BJ (cell line): ENCODE measurements at regions of chr1 and their contacts with region 1.

Region 1: GRCh38 chr1:236759252-236759859 is 35.7 kb upstream of the MTR start:
- DNase-seq: no peak
- H3K4me3 ChIP-seq: no peak overlapping the region
- H3K27me3 ChIP-seq: no peaks in the 10 kb centered on the region; the same call in 1 of the 2 replicates
- CTCF ChIP-seq: peak; percentile 68

Region 2: GRCh38 chr1:236489710-236490377 is 269.5 kb before region 1 on chr1:
- CTCF ChIA-PET with region 1: no interaction called
- POLR2A ChIA-PET with region 1: no interaction called
- DNase-seq: no peak
- H3K4me3 ChIP-seq: no peak overlapping the region
- H3K27me3 ChIP-seq: no peaks in the 10 kb centered on the region
- CTCF ChIP-seq: peak; percentile 52

Region 3: DNA sequence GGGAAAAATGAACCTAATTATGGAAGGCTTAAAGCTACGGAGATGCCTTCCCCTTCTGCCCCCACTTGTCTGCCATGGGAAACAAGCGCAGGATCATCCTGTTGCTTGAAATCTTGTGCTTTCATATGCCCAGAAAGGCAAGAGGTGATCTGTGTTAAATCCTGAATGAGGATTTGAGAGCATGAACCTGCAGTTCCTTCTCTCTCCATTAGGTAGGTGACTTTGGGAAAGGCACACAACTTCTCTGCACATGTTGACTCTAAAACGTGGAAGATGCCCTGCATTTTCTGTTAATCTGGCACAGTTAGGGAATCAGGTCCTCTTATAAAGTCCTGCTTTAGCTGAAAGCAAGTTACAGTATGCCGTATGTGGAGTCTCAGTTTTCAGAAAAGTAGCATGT is 10.9 kb before region 1 on chr1:
- CTCF ChIA-PET with region 1: interaction called, 17 read pairs
- POLR2A ChIA-PET with region 1: no interaction called
- DNase-seq: no peak
- H3K4me3 ChIP-seq: no peak overlapping the region
- H3K27me3 ChIP-seq: no peaks in the 10 kb centered on the region
- CTCF ChIP-seq: no peak

Region 4: GRCh38 chr1:236862615-236863211 is 103.4 kb after region 1 on chr1:
- CTCF ChIA-PET with region 1: interaction called, 20 read pairs
- POLR2A ChIA-PET with region 1: no interaction called
- DNase-seq: no peak
- H3K4me3 ChIP-seq: no peak overlapping the region
- H3K27me3 ChIP-seq: no peaks in the 10 kb centered on the region
- CTCF ChIP-seq: no peak

Region 5: DNA sequence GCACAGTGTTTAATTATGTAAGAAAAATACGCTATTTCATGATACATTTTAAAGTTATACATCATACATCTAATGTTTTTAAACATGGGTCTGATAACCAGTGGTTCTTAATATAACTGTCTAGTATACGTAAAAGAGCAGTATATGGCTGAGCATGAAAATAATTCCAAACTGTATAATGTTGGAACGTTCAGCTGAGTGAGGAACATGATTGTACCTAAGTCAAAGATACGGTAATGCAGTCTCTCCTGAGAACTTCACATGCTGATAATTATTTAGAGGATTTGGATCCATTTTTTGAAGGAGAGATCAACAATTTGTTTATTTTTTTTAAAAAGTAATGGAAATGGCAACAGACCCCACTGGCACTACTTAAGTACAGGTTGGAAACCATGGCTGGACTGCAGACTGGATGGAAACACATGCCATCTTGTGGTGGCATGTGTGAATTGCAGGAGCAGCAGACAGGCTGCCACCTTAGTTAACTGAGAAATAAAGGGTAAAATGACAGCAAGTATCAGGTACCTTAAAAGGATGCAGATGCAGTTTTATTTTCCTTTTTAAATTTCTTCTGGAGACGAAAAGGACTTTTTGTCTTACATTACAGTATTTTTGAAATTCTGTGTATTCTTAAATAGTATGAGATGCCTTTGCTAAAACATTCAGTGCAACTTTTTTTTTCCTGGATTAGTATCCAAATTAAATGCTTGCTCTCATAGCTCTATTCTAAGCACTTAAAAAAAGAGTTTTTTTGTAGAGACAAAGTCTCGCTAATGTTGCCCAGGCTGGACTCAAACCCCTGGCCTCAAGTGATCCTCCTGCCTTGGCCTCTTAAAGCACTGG is 109.5 kb after region 1 on chr1:
- CTCF ChIA-PET with region 1: interaction called, 37 read pairs
- POLR2A ChIA-PET with region 1: no interaction called
- DNase-seq: no peak
- H3K4me3 ChIP-seq: no peak overlapping the region
- H3K27me3 ChIP-seq: no peaks in the 10 kb centered on the region
- CTCF ChIP-seq: peak; percentile 96

Region 6: GRCh38 chr1:236893626-236894545 is 134.5 kb after region 1 on chr1:
- CTCF ChIA-PET with region 1: interaction called, 12 read pairs
- POLR2A ChIA-PET with region 1: no interaction called
- DNase-seq: peak; percentile 82
- H3K4me3 ChIP-seq: no peak overlapping the region
- H3K27me3 ChIP-seq: no peaks in the 10 kb centered on the region
- CTCF ChIP-seq: no peak

Region 7: GRCh38 chr1:237386362-237387143 is 627.2 kb after region 1 on chr1:
- CTCF ChIA-PET with region 1: interaction called, 17 read pairs
- POLR2A ChIA-PET with region 1: no interaction called
- DNase-seq: no peak
- H3K4me3 ChIP-seq: no peak overlapping the region
- H3K27me3 ChIP-seq: no peaks in the 10 kb centered on the region
- CTCF ChIP-seq: peak; percentile 61